Calu3 (cell line): ENCODE measurements at regions of chr4 and their contacts with region 1.

Region 1: DNA sequence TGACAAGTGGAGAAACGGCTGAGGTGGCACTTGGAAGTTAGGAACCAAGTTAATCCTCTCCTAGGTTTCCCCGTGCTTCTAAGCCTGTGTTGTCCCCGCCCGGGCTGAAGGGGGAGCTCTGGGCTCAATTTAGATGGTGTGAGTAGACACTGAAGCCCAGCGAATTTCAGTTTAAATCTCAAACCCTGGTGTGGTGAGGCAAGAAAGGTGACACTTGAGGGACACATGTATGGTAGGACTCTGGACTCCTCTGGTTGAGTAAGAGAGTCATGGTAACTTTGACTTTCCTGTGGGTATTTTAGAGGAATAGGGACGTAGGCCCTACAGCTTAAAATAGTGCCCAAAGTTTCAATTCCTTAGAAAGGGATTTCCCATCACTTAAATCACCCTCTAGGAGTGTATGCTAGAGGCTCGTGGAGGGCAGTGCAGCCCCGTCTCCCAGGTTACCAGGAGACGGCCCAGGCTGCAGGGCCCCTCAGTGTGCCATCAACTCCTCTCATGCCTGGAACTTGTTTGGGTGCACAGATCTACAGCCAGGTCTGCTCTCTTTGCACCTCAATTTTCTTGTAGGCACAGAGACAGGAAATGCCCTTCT is 24.0 kb downstream of the HAND2 start:
- DNase-seq: peak; percentile 66
- H3K4me3 Mint-ChIP-seq: no peak overlapping the region
- H3K27ac Mint-ChIP-seq: no peak overlapping the region
- H3K4me1 Mint-ChIP-seq: no peaks in the 10 kb centered on the region
- H3K27me3 Mint-ChIP-seq: no peaks in the 10 kb centered on the region
- CTCF ChIP-seq: peak; percentile 22

Region 2: DNA sequence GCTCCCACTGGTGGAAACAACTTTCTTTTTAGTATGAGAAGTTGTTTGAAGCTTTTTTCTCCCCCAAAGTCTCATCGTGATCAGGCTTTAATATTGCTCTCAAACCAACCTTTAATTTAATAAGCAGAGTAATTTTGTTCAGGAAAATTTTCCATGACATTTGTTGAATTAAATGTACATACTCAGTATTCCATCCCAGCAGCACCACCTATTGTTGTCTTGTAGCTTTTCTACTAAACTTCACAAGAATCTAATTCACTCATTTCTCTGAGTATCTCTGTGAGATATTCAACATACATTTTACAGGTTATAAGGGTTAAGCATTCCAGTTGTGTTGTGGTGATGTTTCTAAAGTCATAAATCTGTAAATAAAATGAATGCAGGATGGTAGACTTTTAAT is 242.3 kb after region 1 on chr4:
- CTCF ChIA-PET with region 1: no interaction called
- intact Hi-C with region 1: loop called (anchors 5 kb)
- DNase-seq: no peak
- H3K4me3 Mint-ChIP-seq: no peak overlapping the region
- H3K27ac Mint-ChIP-seq: no peak overlapping the region
- H3K4me1 Mint-ChIP-seq: no peaks in the 10 kb centered on the region
- H3K27me3 Mint-ChIP-seq: no peaks in the 10 kb centered on the region
- CTCF ChIP-seq: no peak

Region 3: DNA sequence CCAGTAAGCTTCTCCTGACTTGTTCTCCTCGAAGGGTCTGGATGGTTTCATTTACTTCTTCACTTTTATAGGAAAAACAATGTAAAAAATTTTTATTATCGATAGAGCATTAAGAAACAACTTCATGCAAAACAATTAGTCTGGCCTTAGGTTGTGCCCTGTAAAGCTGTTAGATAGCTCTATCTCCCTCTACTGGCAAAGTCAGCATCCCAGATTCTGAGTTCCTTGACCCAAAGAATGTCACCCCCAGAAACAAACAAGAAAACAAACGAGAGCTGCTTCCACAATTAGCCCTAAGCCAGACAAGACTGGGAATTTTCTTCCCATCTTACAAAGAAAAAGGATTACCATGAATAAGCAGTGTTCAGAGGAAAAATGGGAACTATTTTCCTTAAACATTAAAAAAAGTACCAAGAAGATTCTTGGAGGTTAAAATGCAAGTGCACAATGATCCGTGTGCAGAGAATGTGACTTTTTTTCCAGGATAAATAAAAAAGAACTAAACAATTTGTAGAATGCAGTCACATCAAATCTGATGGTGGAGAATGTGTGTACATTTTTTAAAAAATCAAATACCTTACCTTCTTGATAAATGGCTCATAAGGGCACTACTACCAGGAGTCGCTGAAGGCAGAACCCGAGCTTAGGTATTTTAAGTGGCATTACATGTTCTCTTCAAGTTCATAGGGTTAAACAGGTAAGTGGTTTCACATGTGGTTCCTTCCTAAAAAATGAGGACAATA is 484.3 kb after region 1 on chr4:
- CTCF ChIA-PET with region 1: no interaction called
- intact Hi-C with region 1: loop called (anchors 1 kb)
- DNase-seq: peak; percentile 4
- H3K4me3 Mint-ChIP-seq: no peak overlapping the region
- H3K27ac Mint-ChIP-seq: no peak overlapping the region
- H3K4me1 Mint-ChIP-seq: no peaks in the 10 kb centered on the region
- H3K27me3 Mint-ChIP-seq: no peaks in the 10 kb centered on the region
- CTCF ChIP-seq: no peak

Region 4: DNA sequence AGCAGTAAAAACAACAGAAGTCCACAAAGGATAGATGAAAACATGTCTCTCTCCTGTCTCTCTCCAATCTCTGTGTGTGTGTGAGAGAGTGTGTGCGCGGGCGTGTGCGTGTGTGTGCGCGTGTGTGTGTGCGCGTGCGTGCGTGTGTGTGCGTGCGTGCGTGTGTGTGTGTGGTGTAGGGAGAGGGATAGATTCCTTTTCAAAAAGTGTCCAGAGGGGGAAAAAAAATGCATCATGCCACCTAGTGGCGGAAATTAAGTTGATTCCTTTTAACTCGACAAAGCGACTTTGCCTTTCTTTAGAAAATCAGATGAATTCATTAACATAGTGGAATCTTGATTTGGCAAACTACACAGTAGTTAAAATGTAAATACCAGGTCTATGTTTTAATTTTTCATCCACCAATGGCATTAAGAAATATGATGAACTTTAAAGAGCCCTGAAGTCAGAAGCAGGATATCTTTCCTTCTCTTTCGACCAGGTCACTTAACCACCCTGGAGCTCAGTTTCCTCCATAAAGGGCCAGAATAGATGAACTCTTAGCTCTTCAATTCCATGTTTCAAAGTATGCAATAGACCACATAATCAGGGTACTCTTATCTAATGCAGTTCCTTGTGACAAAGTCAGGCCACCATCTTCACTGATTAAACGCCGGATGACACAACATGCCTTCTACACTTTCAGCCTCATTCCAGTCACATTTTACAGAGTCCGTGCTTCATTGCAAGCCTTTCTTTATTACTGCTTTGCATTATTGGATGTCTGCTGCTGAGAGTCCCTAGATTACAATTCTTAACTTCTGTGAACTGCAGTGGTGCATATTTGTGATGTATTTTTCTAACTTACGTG is 614.6 kb after region 1 on chr4:
- CTCF ChIA-PET with region 1: no interaction called
- intact Hi-C with region 1: loop called (anchors 2 kb)
- DNase-seq: peak; percentile 50
- H3K4me3 Mint-ChIP-seq: peak overlapping the region; percentile 76
- H3K27ac Mint-ChIP-seq: no peak overlapping the region
- H3K4me1 Mint-ChIP-seq: no peaks in the 10 kb centered on the region
- H3K27me3 Mint-ChIP-seq: no peaks in the 10 kb centered on the region
- CTCF ChIP-seq: no peak

Region 5: DNA sequence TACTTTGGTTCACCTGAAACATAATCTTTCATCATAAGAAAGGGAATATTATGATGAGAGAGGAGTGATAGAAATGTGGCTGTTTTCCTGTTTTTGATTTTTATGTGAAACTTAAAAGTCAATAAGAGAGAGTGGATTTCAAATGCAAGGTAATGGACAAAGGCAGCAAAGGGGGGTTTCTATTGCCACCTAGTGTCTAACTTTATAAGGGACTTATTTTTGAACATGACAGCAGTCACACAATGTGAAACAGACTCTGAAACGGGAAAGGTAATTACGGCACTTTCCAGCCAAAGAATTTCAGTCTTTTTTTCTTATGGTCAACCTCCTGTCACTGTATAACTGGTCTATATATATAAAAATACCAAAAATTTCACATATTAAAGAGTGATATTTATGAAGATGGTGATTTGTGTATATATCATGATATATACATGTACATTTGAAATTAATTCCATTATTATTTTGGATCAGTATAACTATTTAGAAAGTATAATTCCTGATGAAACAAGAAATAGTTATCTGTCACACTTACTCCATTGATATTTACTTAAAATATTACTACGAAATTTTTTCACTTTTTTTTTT is 650.3 kb after region 1 on chr4:
- CTCF ChIA-PET with region 1: no interaction called
- intact Hi-C with region 1: loop called (anchors 2 kb)
- DNase-seq: peak; percentile 2
- H3K4me3 Mint-ChIP-seq: no peak overlapping the region
- H3K27ac Mint-ChIP-seq: no peak overlapping the region
- H3K4me1 Mint-ChIP-seq: no peaks in the 10 kb centered on the region
- H3K27me3 Mint-ChIP-seq: no peaks in the 10 kb centered on the region
- CTCF ChIP-seq: no peak